Activated T-helper 1 cell treated with anti-CD3 and anti-CD28 coated beads, Interleukin-12 subunit alpha, Interleukin-12 subunit beta, Interleukin-2, Interleukin-4 antibody, amounts not matched to agents 30 ng/mL and 10 ng/mL and 1 ng/mL, durations not matched to agents 14 hours and 24 hours and 36 hours (primary cell): ENCODE measurements at regions of chr6 and their contacts with region 1.

Region 1: DNA sequence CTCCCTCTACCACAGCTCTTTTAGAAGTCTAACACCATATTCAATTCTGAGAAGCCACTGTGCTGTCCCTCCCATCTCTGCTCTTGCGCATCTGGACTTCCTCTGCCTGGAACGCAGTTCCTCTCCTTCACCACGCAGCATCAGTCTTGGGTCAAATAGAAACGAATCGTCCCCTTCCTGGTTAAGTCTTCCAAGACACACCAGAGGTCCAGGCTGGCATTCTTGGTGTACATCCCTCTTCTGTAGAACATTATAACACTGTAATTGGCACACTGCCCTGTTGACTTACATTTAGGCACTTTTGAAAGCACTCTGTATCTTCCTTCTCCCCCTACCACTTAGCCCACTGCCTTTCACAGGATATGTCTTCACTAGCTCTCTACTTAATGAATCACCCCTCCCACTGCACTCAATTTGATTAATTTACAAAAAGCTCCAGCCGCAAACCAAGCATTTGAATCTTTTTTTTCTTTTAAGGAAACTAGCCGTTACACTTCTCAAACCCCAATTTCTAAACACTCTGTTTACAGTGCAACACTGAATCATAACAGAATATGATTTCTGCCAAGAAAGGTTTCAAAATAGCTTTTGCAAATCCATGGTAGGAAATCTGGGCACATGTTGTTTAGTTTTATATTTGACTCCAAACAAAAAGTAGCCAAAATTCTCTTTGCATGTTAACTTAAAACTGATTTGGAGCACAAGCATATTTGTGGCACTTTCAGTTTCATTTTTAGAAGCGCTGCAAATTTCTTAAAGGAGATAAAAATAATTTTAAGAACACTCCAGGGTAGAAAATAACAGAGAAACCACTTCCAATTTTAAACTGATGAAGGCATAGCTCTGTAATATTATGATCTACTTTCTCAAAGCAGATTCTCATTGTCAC is 140.7 kb upstream of the CARMIL1 start:
- DNase-seq: peak; percentile 72
- H3K4me3 Mint-ChIP-seq: peak overlapping the region; percentile 90
- H3K27ac Mint-ChIP-seq: peak overlapping the region; percentile 97
- H3K4me1 Mint-ChIP-seq: peaks cover 41% of the 10 kb centered on the region
- H3K27me3 Mint-ChIP-seq: no peaks in the 10 kb centered on the region

Region 2: GRCh38 chr6:23953976-23954375 is 1184.5 kb before region 1 on chr6:
- intact Hi-C with region 1: no loop called
- DNase-seq: no peak
- H3K4me3 Mint-ChIP-seq: no peak overlapping the region
- H3K27ac Mint-ChIP-seq: no peak overlapping the region
- H3K4me1 Mint-ChIP-seq: no peaks in the 10 kb centered on the region
- H3K27me3 Mint-ChIP-seq: no peaks in the 10 kb centered on the region

Region 3: DNA sequence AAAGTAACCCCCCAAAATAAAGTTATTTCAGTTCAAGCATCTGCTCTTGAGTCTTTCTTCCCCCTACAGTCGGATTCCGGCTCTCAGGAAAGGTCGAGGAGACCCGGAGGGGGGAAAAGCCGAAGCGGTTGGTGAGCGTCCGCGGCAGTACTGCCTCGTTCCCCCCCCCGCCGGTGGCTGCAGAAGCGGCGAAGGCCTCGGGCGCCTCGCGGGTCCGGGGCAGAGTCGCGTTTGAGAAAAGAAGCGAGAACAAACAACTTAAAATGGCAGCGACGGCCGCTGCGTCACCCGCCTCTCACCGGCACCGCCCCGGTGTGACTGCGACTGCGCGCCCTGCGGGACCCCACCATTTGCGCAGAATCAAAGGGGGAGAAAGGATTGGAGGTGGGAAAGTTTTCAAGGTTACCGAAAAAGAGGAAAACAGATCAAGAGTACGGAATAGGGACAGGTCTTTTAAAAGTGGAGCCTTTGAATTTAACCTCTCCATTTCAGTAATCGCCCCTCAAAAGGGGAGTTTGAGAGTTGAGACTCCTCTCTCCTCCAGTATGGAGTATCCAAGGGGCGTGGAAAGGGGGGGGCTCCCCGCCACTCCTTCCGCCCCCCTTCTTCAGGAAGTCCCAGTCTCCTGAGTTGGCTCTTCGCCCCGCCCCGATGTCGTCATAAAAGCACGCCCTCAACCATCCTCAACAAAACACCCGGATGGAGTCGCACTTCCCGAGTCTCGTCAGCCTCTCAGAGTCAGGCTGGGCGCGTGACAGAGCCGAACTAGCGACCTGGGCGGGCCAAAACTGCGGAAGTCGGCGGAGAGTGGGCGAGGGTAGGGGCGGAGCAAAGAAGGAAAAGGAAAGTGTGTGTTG is 417.6 kb before region 1 on chr6:
- intact Hi-C with region 1: loop called (anchors 2 kb)
- DNase-seq: peak; percentile 100
- H3K4me3 Mint-ChIP-seq: peak overlapping the region; percentile 100
- H3K27ac Mint-ChIP-seq: peak overlapping the region; percentile 96
- H3K4me1 Mint-ChIP-seq: peaks cover 47% of the 10 kb centered on the region
- H3K27me3 Mint-ChIP-seq: no peaks in the 10 kb centered on the region

Region 4: DNA sequence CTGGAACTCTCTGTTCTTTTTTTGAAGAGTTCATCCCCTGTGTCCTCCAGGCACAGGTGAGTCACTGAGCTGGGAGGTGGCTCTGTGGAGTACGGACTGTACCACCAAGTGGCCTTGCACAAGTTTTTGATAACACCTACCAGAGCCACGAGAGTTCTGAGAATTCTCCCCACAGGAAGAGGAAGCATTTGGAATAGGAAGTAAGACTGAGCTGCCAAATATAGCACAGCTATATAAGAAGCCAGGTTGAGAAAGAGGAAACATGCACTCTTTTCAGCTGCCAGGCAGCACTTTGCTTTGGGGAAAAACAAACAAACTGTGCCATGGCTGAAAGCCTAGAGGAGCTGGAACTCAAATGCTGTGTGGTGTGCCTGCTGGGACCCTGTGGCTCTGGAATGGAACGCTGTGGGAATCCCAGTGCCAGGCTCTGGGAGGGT is 131.9 kb before region 1 on chr6:
- intact Hi-C with region 1: loop called (anchors 1 kb)
- DNase-seq: peak; percentile 55
- H3K4me3 Mint-ChIP-seq: peak overlapping the region; percentile 9
- H3K27ac Mint-ChIP-seq: peak overlapping the region; percentile 87
- H3K4me1 Mint-ChIP-seq: peaks cover 82% of the 10 kb centered on the region
- H3K27me3 Mint-ChIP-seq: no peaks in the 10 kb centered on the region

Region 5: GRCh38 chr6:25166955-25167748 is 28.7 kb after region 1 on chr6:
- intact Hi-C with region 1: loop called (anchors 1 kb)
- DNase-seq: no peak
- H3K4me3 Mint-ChIP-seq: peak overlapping the region; percentile 90
- H3K27ac Mint-ChIP-seq: peak overlapping the region; percentile 96
- H3K4me1 Mint-ChIP-seq: peaks cover 74% of the 10 kb centered on the region
- H3K27me3 Mint-ChIP-seq: no peaks in the 10 kb centered on the region

Region 6: DNA sequence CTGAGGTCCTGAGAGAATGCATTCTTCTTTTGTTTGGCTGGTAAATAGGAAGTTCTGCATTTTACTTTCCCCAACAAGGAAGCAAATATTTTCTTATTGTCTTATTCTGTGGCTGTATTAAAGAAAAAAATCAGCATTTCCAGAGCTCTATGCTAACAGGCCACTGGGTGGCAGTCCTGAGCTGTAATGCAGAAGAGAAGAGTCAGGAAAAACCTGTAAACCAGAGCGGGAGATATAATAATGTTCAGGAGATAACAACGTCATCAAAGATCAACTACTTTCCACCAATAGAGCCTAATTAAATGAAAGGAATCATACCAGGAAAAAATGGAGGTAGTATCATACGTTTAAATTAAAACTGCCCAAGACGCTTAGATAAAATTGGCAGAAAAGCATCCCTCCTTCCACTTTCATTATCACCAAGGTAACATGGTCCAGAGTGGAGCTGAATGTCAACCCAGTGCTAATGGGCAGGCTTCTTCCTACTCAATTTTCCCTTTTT is 85.1 kb after region 1 on chr6:
- intact Hi-C with region 1: loop called (anchors 1 kb)
- DNase-seq: peak; percentile 24
- H3K4me3 Mint-ChIP-seq: peak overlapping the region; percentile 79
- H3K27ac Mint-ChIP-seq: no peak overlapping the region
- H3K4me1 Mint-ChIP-seq: peaks cover 14% of the 10 kb centered on the region
- H3K27me3 Mint-ChIP-seq: no peaks in the 10 kb centered on the region

Region 7: DNA sequence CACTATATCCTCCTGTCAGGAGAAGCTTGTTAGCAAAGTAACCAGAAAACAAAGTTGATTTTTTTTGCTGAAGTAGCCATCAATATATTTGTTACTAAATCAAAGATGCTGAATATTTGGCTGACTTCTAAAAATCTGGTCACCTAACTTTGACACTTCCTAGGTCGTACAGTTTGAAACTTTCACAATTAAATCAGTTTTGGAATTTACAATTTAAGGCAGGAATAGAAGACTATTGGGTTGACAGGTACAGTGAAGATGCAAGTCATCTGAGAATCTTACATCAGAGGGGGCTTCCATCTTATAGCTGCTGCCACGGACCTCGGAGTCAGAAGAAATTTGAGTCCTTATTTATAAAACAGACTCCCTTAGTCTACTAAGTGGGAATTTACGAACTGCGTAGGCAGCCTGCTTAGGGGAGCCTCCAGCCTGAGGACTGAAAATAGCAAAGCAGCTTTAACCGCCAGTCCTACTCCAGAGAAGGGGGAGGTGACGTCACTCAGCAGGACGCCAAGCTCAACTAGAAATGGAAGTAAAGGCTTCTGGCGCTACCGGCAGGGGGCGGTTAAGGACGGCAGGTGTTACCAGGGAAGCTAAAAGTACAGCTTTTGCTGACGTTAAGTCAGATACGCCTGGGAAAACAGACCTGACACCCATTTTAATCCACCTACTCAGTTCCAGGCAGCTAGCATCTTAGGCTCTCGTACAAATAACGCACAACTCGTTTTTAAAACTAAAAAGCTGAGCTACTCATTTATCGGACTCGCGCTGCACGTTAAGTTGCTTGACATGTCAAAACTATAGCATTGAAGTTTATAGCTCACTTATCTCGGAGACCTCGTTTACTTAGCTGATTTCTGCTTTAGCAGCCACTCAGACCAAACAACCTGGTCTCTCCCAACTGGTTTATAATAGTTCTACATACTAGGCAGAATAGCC is 887.7 kb after region 1 on chr6:
- intact Hi-C with region 1: loop called (anchors 2 kb)
- DNase-seq: peak; percentile 88
- H3K4me3 Mint-ChIP-seq: peak overlapping the region; percentile 85
- H3K27ac Mint-ChIP-seq: peak overlapping the region; percentile 96
- H3K4me1 Mint-ChIP-seq: peaks cover 93% of the 10 kb centered on the region
- H3K27me3 Mint-ChIP-seq: no peaks in the 10 kb centered on the region